ENCODE measurements at regions of chr18 and their contacts with region 1.

Region 1: DNA sequence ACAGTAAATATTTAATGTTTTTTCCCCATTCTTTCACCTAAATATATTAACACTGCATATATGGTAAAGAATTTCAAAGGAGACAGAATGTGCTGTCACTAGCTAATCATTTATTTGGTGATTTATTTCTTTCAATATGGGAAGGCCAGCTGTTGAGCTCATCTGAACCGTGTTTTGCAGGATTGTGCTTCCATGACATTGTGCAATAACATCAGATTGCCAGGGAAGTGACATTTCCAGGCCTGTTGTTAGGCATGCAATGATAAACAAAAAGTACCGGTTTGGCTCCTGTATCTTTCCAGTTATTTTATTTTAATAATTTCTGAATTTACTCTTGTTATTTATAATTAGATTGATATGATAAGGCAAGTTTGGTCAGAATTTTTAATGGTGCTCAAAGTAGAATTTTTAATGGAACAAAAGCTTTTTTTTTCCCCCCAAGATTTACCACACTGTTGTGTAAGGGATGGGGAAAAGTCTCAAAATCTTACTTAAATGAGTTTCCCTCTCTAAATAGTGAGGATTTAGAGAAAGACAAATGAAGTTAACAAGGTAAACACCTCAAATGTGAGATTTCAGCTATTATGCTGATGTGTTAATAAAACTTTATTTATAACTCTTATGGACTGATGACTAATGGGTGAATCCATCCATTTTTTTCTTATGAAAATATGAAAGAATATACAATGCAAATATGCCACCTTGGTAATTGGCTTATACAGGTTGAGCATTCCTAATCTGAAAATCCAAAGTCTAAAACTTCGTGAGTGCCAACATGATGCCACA is 52.7 kb downstream of the MALT1 start:
- DNase-seq: no peak

Region 2: DNA sequence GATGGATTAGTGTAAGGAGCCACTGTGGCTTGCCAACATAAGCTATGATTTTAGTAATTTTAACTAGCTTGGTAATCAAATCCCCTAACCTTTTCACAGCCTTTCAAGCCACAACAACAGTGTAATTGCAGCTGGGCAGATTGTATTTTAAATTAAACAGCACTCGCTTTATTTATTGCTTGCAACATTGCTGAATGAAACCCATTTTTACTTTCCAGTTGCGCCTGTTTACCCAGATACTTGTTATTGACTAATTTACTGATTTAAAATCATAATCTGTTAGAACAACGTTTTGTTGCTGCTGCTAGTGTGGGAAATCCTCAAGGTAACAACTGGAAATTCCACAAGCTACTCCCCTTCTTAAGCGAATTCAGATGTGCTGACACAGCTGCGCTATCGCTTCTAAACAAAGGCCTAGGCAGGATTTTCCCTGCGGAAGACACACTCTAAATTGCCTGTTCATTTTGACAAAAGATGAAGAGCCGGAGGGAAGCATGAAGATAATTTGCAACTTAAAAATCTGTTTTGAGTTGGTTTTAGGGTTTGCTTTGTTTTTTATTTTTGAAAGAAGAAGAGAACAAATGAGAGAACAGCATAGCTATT is 379.0 kb before region 1 on chr18:
- intact Hi-C with region 1: no loop called
- DNase-seq: no peak

Region 3: DNA sequence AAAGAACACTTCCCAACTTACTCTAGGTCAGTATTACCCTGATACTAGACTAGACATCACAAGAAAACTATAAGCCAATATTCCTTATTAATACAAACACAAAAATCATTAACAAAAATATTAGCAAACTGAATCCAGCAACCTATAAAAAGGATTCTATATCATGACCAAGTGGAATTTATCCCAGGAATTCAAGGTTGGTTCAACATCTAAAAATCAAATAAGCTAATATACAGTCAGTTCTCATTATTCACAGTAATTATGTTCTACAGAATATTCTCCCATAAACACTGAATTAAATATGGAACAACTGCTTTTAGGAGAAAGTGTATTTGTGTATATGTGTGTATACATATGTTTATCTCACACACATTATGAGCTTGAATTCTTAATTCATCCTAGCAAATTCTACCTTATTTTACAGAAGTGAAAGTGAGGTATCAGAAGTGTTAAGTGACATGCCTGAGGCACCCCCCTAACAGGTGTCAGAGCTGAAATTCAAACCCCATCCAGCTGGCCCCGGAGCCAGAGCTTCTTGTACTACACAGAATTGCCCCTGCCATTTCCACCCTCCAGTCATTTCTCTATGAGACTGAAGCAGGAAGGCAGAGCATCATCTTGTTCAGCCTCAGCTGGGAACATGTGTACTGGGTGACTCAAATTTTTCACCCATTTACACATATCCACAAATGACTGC is 25.0 kb after region 1 on chr18:
- intact Hi-C with region 1: loop called in 1 of 2 experiments (anchors 1 kb)
- DNase-seq: no peak